ENCODE measurements at regions of chr6 and their contacts with region 1.

Region 1: GRCh38 chr6:107489636-107490565 is at the start of gene SOBP:
- DNase-seq: peak; percentile 41
- H3K4me3 Mint-ChIP-seq: peak within 1 kb of the TSS; percentile 82
- H3K27ac Mint-ChIP-seq: no peak within 1 kb of the TSS
- H3K4me1 Mint-ChIP-seq: peaks cover 12% of the 10 kb centered on the region
- H3K27me3 Mint-ChIP-seq: peaks cover 44% of the 10 kb centered on the region
- total RNA-seq, gene SOBP: 0.24 to 0.29 TPM

Region 2: DNA sequence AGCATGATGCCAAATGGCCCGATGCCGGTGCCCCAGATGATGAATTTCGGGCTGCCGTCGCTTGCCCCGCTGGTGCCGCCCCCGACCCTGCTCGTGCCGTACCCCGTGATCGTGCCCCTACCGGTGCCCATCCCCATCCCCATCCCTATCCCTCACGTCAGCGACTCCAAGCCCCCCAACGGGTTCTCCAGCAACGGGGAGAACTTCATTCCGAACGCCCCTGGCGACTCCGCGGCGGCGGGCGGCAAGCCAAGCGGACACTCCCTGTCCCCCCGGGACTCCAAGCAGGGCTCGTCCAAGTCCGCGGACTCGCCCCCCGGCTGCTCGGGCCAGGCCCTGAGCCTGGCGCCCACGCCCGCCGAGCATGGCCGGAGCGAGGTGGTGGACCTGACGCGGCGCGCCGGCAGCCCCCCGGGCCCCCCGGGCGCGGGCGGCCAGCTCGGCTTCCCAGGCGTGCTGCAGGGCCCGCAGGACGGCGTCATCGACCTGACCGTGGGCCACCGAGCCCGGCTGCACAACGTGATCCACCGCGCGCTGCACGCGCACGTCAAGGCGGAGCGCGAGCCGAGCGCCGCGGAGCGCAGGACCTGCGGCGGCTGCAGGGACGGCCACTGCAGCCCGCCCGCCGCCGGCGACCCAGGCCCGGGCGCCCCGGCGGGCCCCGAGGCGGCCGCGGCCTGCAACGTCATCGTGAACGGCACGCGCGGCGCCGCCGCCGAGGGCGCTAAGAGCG is 144.6 kb after region 1 on chr6:
- CTCF ChIA-PET with region 1: no interaction called
- POLR2A ChIA-PET with region 1: no interaction called
- intact Hi-C with region 1: no loop called
- DNase-seq: no peak
- H3K4me3 Mint-ChIP-seq: peak overlapping the region; percentile 35
- H3K27ac Mint-ChIP-seq: no peak overlapping the region
- H3K4me1 Mint-ChIP-seq: peaks cover 4% of the 10 kb centered on the region
- H3K27me3 Mint-ChIP-seq: peaks cover 61% of the 10 kb centered on the region

Region 3: DNA sequence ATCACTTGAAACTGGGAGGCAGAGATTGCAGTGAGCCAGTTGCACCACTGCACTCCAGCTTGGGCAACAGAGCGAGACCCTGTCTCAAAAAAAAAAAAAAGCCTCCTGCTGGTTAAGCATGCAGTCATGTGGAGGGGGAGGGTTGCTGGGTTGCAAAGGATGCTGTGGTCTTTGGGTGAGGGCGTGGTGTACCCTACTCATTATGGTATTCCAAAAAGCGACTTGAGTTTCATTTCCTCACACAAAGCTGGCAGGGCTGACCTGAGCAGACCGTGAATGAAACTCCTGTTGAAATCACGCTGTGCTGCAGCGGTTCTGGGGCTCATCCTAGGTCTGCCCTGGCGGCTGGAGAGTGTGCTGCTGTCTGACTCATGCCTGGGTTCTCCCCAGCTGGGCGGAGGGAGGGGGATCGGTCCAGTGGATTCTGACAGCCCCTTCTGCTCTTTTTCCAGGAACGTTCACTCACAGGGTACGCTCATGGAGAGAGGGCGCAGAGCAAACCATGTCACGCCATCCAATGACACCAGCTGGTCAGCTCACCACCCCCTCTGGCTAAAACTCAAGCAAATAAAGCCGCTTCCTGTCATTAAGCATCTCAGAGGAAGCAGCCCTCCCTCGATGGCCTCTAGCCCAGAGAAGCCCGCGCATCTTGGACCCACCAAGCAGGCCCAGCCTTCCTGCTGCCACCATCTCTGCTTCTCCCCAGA is 168.0 kb after region 1 on chr6:
- CTCF ChIA-PET with region 1: interaction called, 4 read pairs
- POLR2A ChIA-PET with region 1: no interaction called
- intact Hi-C with region 1: loop called (anchors 5 kb)
- DNase-seq: peak; percentile 84
- H3K4me3 Mint-ChIP-seq: no peak overlapping the region
- H3K27ac Mint-ChIP-seq: no peak overlapping the region
- H3K4me1 Mint-ChIP-seq: peaks cover 19% of the 10 kb centered on the region
- H3K27me3 Mint-ChIP-seq: peaks cover 1% of the 10 kb centered on the region